Activated CD4-positive, alpha-beta memory T cell treated with anti-CD3 and anti-CD28 coated beads for 36 hours (primary cell): ENCODE measurements at regions of chr16 and their contacts with region 1.

Region 1: DNA sequence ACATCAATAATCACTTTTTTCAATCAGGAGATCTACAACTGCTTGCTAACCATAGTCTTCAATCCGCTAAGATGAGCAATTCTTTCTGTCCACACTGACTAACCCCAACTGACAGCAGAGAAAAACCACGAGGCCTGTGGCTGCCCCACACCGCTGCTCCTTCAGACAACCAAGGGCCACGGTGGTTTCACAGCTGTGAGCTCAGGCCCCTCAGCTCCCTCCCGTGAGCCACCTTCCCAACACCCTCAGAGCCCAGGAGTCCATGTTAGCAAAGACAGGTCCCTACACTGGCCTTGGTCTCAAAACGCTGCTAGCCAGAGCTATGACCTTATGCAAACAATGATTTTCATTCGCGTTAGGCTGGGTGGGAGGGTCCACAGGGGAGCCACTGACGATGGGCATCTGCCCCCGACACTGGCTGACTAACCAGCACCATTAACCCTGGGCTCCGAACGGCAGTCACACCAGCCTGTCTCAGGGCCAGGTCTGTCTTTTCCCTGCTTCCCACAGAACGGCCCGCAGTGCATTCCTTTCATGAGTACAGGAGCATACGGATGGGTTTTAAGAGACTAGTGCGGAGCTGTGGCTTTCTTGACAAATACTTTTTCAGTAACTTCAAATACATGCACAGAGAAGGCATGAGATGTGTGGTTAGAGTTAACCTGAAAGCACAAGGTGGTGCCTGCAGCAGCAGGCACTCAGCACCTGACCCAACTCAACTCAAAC is 67.3 kb downstream of the ANKRD11 start:
- DNase-seq: peak; percentile 82
- H3K4me3 Mint-ChIP-seq: peak overlapping the region; percentile 28
- H3K27ac Mint-ChIP-seq: peak overlapping the region; percentile 80
- H3K4me1 Mint-ChIP-seq: peaks cover 76% of the 10 kb centered on the region
- H3K27me3 Mint-ChIP-seq: no peaks in the 10 kb centered on the region

Region 2: GRCh38 chr16:89383082-89384003 is 39.7 kb before region 1 on chr16:
- CTCF ChIA-PET with region 1: no interaction called
- POLR2A ChIA-PET with region 1: no interaction called
- intact Hi-C with region 1: loop called (anchors 5 kb)
- DNase-seq: peak; percentile 53
- H3K4me3 Mint-ChIP-seq: peak overlapping the region; percentile 4
- H3K27ac Mint-ChIP-seq: peak overlapping the region; percentile 82
- H3K4me1 Mint-ChIP-seq: peaks cover 84% of the 10 kb centered on the region
- H3K27me3 Mint-ChIP-seq: no peaks in the 10 kb centered on the region

Region 3: GRCh38 chr16:89442990-89443731 is 20.1 kb after region 1 on chr16:
- CTCF ChIA-PET with region 1: interaction called, 5 read pairs
- POLR2A ChIA-PET with region 1: interaction called, 3 read pairs
- intact Hi-C with region 1: loop called (anchors 2 kb)
- DNase-seq: no peak
- H3K4me3 Mint-ChIP-seq: no peak overlapping the region
- H3K27ac Mint-ChIP-seq: peak overlapping the region; percentile 10
- H3K4me1 Mint-ChIP-seq: peaks cover 93% of the 10 kb centered on the region
- H3K27me3 Mint-ChIP-seq: no peaks in the 10 kb centered on the region

Region 4: GRCh38 chr16:89484923-89485679 is 62.0 kb after region 1 on chr16:
- CTCF ChIA-PET with region 1: no interaction called
- POLR2A ChIA-PET with region 1: interaction called, 5 read pairs
- intact Hi-C with region 1: loop called (anchors 2 kb)
- DNase-seq: peak; percentile 68
- H3K4me3 Mint-ChIP-seq: peak overlapping the region; percentile 56
- H3K27ac Mint-ChIP-seq: peak overlapping the region; percentile 88
- H3K4me1 Mint-ChIP-seq: peaks cover 82% of the 10 kb centered on the region
- H3K27me3 Mint-ChIP-seq: no peaks in the 10 kb centered on the region

Region 5: DNA sequence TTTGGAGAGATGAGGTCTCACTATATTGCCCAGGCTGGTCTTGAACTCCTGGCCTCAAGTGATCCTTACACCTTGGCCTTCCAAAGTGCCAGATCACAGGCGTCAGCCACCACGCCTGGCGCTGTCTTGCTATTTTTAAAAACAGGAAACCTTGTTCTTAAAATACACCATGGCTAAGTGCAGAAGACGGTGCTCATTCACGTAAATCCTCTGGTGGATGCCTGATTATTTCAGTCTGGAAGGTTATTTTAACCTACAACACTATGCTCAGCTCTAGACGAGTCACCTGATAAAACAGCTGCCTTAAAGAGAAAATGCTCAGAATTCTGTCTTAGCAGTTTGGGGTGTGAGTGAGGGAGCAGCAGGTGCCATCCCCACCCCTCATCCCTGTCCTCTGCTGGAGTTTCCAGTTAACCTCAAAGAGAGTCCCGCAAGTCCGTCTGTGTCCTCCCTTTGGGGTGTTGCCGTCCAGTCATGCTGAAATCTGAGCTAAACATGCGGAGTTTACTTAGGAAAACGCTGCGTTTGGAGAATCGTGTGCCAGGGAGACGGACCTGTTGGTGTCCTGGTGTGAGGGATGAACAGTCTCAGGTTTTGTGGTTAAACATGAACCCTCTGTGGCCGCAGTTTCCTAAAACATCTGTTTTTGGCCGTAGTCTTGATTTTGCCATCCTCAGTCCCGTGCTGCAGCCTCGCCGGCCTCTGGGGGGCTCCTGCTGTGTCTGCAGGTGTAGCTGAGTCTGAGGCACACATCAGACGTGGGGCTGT is 102.3 kb after region 1 on chr16:
- CTCF ChIA-PET with region 1: no interaction called
- POLR2A ChIA-PET with region 1: no interaction called
- intact Hi-C with region 1: no loop called
- DNase-seq: no peak
- H3K4me3 Mint-ChIP-seq: no peak overlapping the region
- H3K27ac Mint-ChIP-seq: no peak overlapping the region
- H3K4me1 Mint-ChIP-seq: no peaks in the 10 kb centered on the region
- H3K27me3 Mint-ChIP-seq: no peaks in the 10 kb centered on the region